Posterior cingulate gyrus (tissue), 11 donors: ENCODE measurements at regions of chr3 and their contacts with region 1.

Region 1: DNA sequence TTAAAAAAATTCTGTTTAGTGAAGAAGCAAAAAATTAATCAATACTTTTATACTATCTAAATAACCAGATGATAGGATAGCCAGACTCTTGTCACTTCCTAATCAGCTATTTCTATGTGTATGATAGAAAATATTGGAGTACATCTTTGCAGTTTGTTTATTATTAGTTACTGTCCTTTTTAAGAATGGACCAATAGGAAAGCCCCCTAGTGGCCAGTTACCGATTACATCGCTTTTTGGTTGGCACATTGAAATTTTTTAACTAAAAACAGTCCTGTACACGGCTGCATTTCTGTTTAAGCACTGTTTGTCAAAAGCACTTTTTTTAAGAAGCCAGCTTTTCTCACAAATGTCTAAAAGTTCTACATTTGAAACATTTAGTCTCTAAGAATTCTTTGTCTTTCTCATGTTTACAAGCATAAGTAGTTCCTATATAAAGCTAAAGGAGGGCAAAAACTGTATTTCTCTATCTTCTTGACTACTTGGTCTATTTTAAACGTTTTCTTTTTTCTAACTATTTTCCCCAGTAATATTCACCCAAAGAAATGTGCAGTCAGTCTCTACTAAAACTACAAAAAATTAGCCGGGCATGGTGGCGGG is 253.2 kb upstream of the LRTM1 start:
- DNase-seq: peak in 2 of 10 donors; percentile 14 to 30

Region 2: GRCh38 chr3:54853573-54854404 is 327.2 kb before region 1 on chr3:
- intact Hi-C with region 1: loop called (anchors 2 kb)
- DNase-seq: peak; percentile 77 to 98 (median 89)

Region 3: DNA sequence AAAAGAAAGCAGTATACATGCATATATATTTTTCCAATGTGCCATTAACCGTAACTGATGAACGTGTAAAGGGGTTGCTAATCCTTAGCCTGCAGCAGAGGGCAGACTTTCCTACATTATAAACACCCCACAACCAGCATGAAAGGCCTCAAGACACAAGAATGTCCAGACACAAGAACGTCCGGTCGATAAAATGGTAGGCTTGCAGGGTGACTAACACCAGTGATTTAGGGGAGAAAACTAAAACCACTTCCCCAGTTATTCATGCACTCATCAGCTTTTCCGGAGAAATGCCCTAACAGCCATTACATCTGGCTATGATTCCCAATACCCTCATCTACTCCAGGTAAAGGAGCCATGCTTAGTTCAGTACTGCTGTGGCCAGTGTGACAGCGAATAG is 310.6 kb before region 1 on chr3:
- intact Hi-C with region 1: loop called (anchors 5 kb)
- DNase-seq: peak in 2 of 10 donors; percentile 21 to 49